Mammary epithelial cell (primary cell): ENCODE measurements at regions of chr10 and their contacts with region 1.

Region 1: DNA sequence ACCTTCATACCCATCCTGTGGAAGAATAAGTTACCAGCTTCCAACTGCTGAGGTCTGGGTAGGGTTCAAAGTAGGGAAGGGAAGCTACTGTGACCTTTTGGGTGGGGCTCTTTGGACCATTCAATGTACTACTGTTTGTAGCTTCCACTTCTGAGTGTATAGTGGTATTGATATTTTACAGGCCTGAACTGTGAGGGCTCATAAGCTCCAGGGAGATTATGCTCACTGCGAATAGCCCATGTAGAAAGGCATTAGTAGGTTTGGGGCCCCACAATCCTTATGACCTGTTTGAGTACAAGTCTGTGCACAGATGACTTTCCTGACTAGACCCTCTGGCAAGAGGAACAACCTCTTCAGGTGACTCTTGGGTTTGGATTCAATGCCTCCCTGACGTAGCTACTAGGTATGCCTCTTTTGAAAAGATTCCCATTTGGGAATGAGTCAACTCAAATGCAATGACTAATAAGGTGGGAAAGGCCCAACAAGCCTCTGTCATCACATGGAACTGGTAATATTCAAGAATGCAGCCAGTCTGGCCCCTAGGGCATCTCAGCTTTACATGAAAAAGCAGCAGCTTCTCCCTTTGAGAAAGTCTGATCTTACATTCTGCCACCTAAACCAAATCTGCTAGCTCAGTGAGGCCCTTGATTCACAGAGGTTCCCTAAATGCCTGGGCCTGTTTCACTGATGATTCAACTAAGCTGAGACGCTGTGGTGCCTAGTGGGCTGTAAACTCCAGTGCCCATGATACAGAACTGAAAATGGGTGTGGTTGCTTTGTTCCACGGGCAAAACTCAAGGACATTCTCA is 79.8 kb downstream of the ABI1 start:
- DNase-seq: peak; percentile 100
- H3K4me3 ChIP-seq: no peak overlapping the region
- H3K27ac ChIP-seq: peak overlapping the region; percentile 97
- H3K4me1 ChIP-seq: peaks cover 55% of the 10 kb centered on the region
- H3K27me3 ChIP-seq: no peaks in the 10 kb centered on the region
- CTCF ChIP-seq: no peak

Region 2: GRCh38 chr10:26737730-26738129 is 43.3 kb before region 1 on chr10:
- CTCF ChIA-PET with region 1: no interaction called
- dilution Hi-C with region 1: no loop called
- in situ Hi-C with region 1: no loop called
- intact Hi-C with region 1: no loop called
- DNase-seq: peak; percentile 56
- H3K4me3 ChIP-seq: no peak overlapping the region
- H3K27ac ChIP-seq: no peak overlapping the region
- H3K4me1 ChIP-seq: no peaks in the 10 kb centered on the region
- H3K27me3 ChIP-seq: no peaks in the 10 kb centered on the region
- CTCF ChIP-seq: no peak

Region 3: GRCh38 chr10:26770069-26770468 is 10.9 kb before region 1 on chr10:
- CTCF ChIA-PET with region 1: no interaction called
- dilution Hi-C with region 1: no loop called
- in situ Hi-C with region 1: no loop called
- intact Hi-C with region 1: no loop called
- DNase-seq: no peak
- H3K4me3 ChIP-seq: no peak overlapping the region
- H3K27ac ChIP-seq: no peak overlapping the region
- H3K4me1 ChIP-seq: no peaks in the 10 kb centered on the region
- H3K27me3 ChIP-seq: no peaks in the 10 kb centered on the region
- CTCF ChIP-seq: no peak

Region 4: DNA sequence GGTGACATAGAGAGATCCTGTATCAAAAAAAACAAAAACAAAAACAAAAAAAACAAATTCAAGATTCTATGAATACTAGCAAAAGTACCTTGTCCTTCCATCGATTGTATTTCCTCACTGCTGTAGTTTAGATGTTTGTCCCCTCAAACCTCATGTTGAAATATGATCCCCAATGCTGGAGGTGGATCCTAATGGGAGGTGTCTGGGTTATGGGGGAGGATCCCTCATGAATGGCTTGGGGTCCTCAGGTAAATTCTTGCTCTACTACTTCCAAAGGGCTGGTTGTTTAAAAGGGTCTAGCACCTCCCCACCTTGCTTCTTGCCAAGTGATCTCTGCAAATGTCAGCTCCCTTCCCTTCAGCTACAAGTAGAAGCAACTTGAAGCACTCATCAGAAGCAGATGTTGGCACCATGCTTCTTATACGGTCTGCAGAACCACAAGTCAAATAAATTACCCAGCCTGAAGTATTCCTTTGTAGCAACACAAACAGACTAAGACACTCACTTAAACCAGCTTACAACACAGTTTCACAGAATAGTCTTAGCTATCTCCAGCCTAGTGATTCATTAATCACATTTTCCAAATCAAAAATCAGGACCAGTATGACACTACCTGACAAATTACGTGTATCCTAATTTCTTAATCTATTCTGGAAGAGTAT is 59.1 kb after region 1 on chr10:
- CTCF ChIA-PET with region 1: no interaction called
- dilution Hi-C with region 1: loop called (anchors 10 kb)
- in situ Hi-C with region 1: loop called in 1 of 2 experiments (anchors 10 kb)
- intact Hi-C with region 1: loop called (anchors 5 kb)
- DNase-seq: no peak
- H3K4me3 ChIP-seq: no peak overlapping the region
- H3K27ac ChIP-seq: no peak overlapping the region
- H3K4me1 ChIP-seq: peaks cover 16% of the 10 kb centered on the region
- H3K27me3 ChIP-seq: no peaks in the 10 kb centered on the region
- CTCF ChIP-seq: no peak

Region 5: GRCh38 chr10:26860443-26861204 is 79.6 kb after region 1 on chr10 and contains the start of gene ABI1:
- CTCF ChIA-PET with region 1: interaction called, 4 read pairs
- dilution Hi-C with region 1: no loop called
- in situ Hi-C with region 1: no loop called
- intact Hi-C with region 1: loop called (anchors 1 kb)
- DNase-seq: peak; percentile 98
- H3K4me3 ChIP-seq: peak within 1 kb of the TSS; percentile 88 to 100 (median 89)
- H3K27ac ChIP-seq: peak within 1 kb of the TSS; percentile 100
- H3K4me1 ChIP-seq: peaks cover 16% of the 10 kb centered on the region
- H3K27me3 ChIP-seq: no peaks in the 10 kb centered on the region
- CTCF ChIP-seq: no peak
- total RNA-seq, gene ABI1: 55.2 to 72.6 TPM